Mammary epithelial cell (primary cell): ENCODE measurements at regions of chr1 and their contacts with region 1.

Region 1: GRCh38 chr1:185404291-185404690 is 87.2 kb upstream of the IVNS1ABP start:
- DNase-seq: no peak
- H3K4me3 ChIP-seq: no peak overlapping the region
- H3K27ac ChIP-seq: peak overlapping the region; percentile 12
- H3K4me1 ChIP-seq: peaks cover 38% of the 10 kb centered on the region
- H3K27me3 ChIP-seq: no peaks in the 10 kb centered on the region
- CTCF ChIP-seq: no peak

Region 2: DNA sequence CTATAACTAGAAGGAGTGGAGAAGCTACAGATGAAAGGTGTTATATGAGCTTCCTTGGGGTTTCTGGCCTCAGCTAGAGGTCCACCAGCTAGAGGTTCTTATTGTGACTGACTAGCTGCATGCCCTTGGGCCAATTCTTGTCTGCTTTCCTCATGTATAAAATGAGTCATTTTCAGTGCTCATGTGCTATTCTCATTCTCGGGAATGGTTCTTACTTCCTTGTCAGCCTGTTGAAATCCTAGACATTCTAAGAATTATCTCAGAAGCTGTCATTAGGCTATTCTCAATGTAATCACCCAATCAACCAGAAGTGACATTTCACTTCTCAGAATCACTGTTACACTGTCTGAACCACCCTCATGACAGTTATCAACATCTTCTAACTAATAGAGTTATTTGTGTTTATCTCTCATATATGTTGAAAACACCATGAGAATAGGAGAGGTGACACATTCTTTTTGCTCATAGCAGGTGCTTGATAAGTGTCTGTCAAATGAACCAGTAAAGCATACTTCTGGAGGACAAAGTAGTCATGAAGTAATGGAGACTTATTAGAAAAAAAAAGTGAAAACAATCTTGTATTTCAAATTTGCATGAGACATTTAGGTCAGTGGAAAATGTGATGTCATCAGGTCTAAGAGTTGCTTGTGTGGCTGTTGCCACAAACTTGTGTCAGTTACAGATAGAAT is 35.6 kb after region 1 on chr1:
- CTCF ChIA-PET with region 1: no interaction called
- dilution Hi-C with region 1: no loop called
- in situ Hi-C with region 1: no loop called
- intact Hi-C with region 1: loop called (anchors 5 kb)
- DNase-seq: peak; percentile 89
- H3K4me3 ChIP-seq: no peak overlapping the region
- H3K27ac ChIP-seq: peak overlapping the region; percentile 12
- H3K4me1 ChIP-seq: peaks cover 25% of the 10 kb centered on the region
- H3K27me3 ChIP-seq: no peaks in the 10 kb centered on the region
- CTCF ChIP-seq: no peak

Region 3: GRCh38 chr1:185559684-185560331 is 155.5 kb after region 1 on chr1:
- CTCF ChIA-PET with region 1: no interaction called
- dilution Hi-C with region 1: no loop called
- in situ Hi-C with region 1: no loop called
- intact Hi-C with region 1: loop called (anchors 5 kb)
- DNase-seq: peak; percentile 65
- H3K4me3 ChIP-seq: no peak overlapping the region
- H3K27ac ChIP-seq: no peak overlapping the region
- H3K4me1 ChIP-seq: peaks cover 17% of the 10 kb centered on the region
- H3K27me3 ChIP-seq: no peaks in the 10 kb centered on the region
- CTCF ChIP-seq: peak; percentile 60 to 74

Region 4: GRCh38 chr1:185636848-185637247 is 232.6 kb after region 1 on chr1:
- CTCF ChIA-PET with region 1: no interaction called
- dilution Hi-C with region 1: no loop called
- in situ Hi-C with region 1: no loop called
- intact Hi-C with region 1: loop called (anchors 10 kb)
- DNase-seq: peak; percentile 99
- H3K4me3 ChIP-seq: no peak overlapping the region
- H3K27ac ChIP-seq: peak overlapping the region; percentile 96
- H3K4me1 ChIP-seq: peaks cover 36% of the 10 kb centered on the region
- H3K27me3 ChIP-seq: no peaks in the 10 kb centered on the region
- CTCF ChIP-seq: no peak